Activated CD4-positive, alpha-beta memory T cell treated with anti-CD3 and anti-CD28 coated beads for 36 hours (primary cell): ENCODE measurements at regions of chr20 and their contacts with region 1.

Region 1: GRCh38 chr20:44805979-44806620 is 4.2 kb downstream of the RIMS4 start:
- DNase-seq: no peak
- H3K4me3 Mint-ChIP-seq: no peak overlapping the region
- H3K27ac Mint-ChIP-seq: no peak overlapping the region
- H3K4me1 Mint-ChIP-seq: peaks cover 4% of the 10 kb centered on the region
- H3K27me3 Mint-ChIP-seq: peaks cover 37% of the 10 kb centered on the region

Region 2: DNA sequence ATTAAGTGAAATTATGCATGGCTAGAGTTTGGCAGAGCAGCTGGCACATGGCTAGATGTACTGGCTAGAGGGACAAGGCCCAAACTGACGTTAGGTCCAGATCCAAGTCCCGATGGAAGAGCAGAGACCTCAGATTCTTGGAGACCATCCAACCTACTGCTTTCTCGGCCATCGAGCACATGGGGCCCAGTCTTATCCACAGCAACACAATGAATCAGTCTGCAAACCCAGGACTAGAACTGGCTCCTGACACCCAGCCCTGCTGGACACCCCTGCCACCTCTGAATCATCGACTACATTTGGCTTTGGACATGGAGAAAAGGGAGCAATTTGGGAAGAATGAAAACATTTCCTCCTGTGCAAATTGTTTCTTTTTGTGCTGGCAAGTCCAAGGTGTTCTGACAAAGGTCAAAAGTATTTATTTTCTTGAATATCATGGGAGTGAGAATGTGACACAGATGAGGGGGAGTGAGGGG is 55.5 kb after region 1 on chr20:
- CTCF ChIA-PET with region 1: no interaction called
- POLR2A ChIA-PET with region 1: no interaction called
- intact Hi-C with region 1: loop called (anchors 10 kb)
- DNase-seq: no peak
- H3K4me3 Mint-ChIP-seq: no peak overlapping the region
- H3K27ac Mint-ChIP-seq: no peak overlapping the region
- H3K4me1 Mint-ChIP-seq: peaks cover under 1% of the 10 kb centered on the region
- H3K27me3 Mint-ChIP-seq: no peaks in the 10 kb centered on the region